ENCODE measurements at regions of chr12 and their contacts with region 1.

Region 1: GRCh38 chr12:54191550-54192022 is 2.8 kb upstream of the SMUG1 start:
- DNase-seq: peak; percentile 85
- H3K4me3 ChIP-seq: no peak overlapping the region
- H3K27ac ChIP-seq: no peak overlapping the region
- H3K4me1 ChIP-seq: peaks cover 8% of the 10 kb centered on the region; the same call in 1 of the 2 replicates
- H3K27me3 ChIP-seq: no peaks in the 10 kb centered on the region; the same call in 1 of the 2 replicates

Region 2: DNA sequence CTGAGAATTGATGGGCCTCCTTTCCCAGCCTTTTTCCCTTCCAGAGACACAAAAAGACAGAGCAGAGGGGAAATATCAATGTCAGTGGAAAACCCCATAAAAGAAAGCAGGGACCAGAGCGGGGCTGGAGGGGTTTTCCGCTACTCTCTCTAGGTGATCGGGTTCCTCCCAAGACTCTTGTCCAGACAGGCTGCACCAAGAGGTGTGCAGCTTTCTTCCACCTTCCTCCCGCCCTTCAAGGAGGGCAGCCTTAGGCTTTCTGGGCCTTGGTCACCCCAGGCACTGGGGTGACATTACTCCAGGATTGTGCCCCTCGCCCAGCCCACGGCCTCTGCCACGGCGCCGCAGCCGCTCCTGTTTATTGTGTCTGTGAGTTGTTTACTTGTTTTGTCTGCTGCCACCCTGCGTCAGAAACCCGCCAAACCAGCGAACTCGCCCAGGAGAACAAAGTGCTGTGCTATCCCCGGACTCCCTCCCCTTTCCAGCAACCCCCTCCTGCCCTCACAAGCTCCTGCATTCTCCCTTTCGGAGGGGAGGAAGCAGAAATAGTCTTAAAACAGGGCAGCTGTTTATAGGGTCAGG is 170.1 kb before region 1 on chr12:
- in situ Hi-C with region 1: loop called (anchors 10 kb)
- DNase-seq: peak; percentile 78
- H3K4me3 ChIP-seq: peak overlapping the region; percentile 78
- H3K27ac ChIP-seq: peak overlapping the region; percentile 99
- H3K4me1 ChIP-seq: peaks cover 62% of the 10 kb centered on the region
- H3K27me3 ChIP-seq: no peaks in the 10 kb centered on the region